Left ventricle myocardium inferior (tissue), 1 donor: ENCODE measurements at regions of chr3 and their contacts with region 1.

Region 1: DNA sequence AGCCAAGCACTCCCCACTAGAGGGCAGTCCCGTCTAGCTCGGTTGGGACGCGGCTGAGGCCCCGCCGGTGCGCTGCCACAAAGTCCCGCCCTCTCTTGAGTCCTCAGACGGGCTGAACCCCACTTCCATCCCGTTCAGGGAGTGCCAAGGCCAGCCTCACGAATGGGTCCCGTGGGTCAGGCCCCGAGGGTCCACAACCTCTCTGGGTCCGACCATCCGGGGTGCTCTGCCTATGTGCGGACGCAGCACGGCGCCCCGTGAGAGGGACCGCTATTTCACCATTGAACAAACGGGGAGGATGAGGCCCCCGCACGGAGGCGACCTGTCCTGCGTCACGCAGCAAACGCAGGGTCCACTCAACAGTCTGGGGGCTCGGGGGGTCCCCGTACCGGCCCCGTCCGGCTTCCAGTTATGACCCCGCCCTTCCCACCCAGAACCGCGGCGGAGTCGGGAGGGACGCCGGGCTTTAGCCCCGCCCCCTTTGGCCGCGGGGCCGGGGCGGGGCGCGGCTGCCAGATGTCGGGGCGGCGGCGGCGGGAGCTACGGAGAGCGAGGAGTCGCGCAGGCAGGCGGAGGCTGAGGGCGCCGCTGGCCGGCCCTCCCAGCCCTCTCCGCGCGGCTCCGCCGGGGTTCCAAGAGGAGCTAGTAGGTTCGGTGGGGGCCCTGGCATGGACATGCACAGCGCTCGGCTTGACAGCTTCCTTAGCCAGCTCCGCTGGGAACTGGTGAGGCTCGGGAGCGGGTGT is at the start of gene INKA1:
- DNase-seq: peak; percentile 90
- H3K4me3 ChIP-seq: peak within 1 kb of the TSS; percentile 91
- H3K27ac ChIP-seq: peak within 1 kb of the TSS; percentile 99
- H3K4me1 ChIP-seq: peaks cover 56% of the 10 kb centered on the region
- H3K27me3 ChIP-seq: no peaks in the 10 kb centered on the region
- CTCF ChIP-seq: peak; percentile 93
- total RNA-seq, gene INKA1: 2.3 TPM

Region 2: GRCh38 chr3:49841126-49841696 is 38.3 kb after region 1 on chr3:
- intact Hi-C with region 1: loop called (anchors 5 kb)
- DNase-seq: no peak
- H3K4me3 ChIP-seq: no peak overlapping the region
- H3K27ac ChIP-seq: no peak overlapping the region
- H3K4me1 ChIP-seq: peaks cover 43% of the 10 kb centered on the region
- H3K27me3 ChIP-seq: no peaks in the 10 kb centered on the region
- CTCF ChIP-seq: peak; percentile 52

Region 3: DNA sequence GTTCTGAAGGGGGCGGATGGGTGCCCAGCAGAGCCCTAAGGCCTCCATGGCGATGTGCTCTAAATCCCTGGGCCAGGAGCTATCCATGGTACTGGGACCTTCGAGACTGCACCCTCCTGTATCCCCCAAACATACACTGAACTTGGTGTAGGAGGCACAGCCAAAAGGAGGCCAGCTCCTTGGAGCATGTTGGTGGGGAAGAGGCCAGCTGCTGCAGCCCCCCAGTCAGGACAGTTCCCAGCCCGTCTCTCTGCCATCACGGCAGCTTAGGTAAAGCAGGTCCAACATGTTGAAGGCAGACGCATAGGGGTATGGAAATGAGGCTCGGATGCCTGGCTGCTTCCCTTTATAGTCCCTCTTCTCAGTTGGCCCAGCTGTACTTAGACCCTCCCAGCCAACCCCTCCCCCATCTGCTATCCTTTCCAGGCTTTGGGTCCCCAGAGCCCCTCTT is 65.0 kb after region 1 on chr3:
- intact Hi-C with region 1: no loop called
- DNase-seq: no peak
- H3K4me3 ChIP-seq: no peak overlapping the region
- H3K27ac ChIP-seq: no peak overlapping the region
- H3K4me1 ChIP-seq: peaks cover 13% of the 10 kb centered on the region
- H3K27me3 ChIP-seq: peaks cover 86% of the 10 kb centered on the region
- CTCF ChIP-seq: no peak

Region 4: DNA sequence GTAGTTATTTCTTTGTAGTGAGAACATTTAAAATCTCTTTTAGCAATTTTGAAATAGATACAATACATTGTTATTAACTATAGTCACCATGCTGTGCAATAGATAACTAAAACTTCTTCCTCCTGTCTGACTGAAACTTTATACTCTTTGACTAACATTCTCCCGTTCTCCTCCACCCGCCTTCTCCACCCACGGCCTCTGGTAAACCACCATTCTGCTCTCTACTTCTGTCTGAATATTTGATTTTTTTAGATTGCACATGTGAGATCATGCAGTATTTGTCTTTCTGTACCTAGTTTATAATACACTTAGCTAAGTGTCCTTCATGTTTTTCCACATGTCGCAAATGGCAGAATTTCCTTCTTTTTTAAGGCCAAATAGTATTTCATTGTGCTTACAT is 213.0 kb after region 1 on chr3:
- intact Hi-C with region 1: no loop called
- DNase-seq: no peak
- H3K4me3 ChIP-seq: no peak overlapping the region
- H3K27ac ChIP-seq: no peak overlapping the region
- H3K4me1 ChIP-seq: peaks cover 3% of the 10 kb centered on the region
- H3K27me3 ChIP-seq: no peaks in the 10 kb centered on the region
- CTCF ChIP-seq: no peak

Region 5: DNA sequence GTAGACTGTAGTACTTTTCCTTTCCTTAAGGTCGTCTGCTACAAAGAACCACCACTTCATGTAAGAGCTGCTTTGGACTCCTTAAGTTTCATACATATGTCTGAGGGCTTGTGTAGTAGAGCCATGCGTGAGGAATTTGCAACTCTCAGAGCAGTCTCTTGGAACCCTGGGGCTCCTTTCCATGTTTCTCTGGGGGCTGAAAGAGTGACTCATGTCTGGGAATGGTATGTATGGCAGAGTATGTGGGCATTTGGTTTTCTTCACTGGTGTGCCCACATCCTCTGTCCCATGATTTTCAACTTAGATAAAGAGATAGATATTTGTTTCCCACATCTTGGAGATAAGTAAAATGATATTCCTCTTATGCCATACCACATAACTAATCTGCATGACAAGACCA is 265.2 kb after region 1 on chr3:
- intact Hi-C with region 1: no loop called
- DNase-seq: no peak
- H3K4me3 ChIP-seq: no peak overlapping the region
- H3K27ac ChIP-seq: no peak overlapping the region
- H3K4me1 ChIP-seq: no peaks in the 10 kb centered on the region
- H3K27me3 ChIP-seq: no peaks in the 10 kb centered on the region
- CTCF ChIP-seq: no peak

Region 6: GRCh38 chr3:50121416-50122032 is 318.6 kb after region 1 on chr3:
- intact Hi-C with region 1: no loop called
- DNase-seq: peak; percentile 70
- H3K4me3 ChIP-seq: no peak overlapping the region
- H3K27ac ChIP-seq: no peak overlapping the region
- H3K4me1 ChIP-seq: peaks cover 24% of the 10 kb centered on the region
- H3K27me3 ChIP-seq: no peaks in the 10 kb centered on the region
- CTCF ChIP-seq: peak; percentile 84